ENCODE measurements at regions of chr20 and their contacts with region 1.

Region 1: DNA sequence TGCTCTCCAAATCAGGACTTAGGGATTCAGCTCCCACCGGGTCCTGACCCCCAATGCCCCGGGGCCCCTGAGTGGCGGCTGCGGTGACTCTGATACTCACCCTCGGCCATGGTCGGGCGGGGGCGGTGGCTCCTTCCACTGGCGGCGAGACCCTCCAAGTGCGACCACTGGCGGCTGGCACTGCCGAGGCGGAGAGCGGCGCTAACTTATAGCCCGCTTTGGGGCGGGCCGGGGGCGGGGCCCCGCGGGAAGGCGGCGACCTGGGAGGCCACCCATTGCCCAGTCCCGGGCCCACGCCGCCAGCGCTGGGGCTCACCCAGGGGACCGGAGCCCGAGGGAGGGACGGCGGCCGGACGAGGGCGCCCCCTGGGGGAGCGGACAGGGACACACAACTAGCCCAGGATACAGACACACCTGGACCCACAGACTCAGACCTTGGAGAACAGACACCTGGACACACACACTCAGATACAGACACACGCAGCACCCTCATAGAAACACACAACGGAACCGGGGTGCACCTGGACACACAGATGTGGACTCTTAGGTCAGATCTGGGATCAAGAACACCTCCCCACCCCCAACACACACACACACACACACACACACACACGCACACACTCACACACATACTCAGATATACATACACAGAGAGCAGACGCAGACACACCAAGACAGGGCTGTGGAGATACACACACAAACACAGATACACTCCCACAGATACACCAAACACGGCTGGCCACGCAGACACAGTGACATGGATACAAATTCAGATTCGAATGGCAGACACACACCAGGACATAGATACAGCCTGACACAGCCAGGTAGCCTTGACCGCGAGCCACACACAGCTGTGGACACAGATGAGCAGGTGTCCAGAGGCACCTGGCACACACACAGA is at the start of gene TGM2:
- DNase-seq: peak; percentile 71
- H3K4me3 ChIP-seq: peak within 1 kb of the TSS in 2 of 3 experiments; percentile 9 to 41
- H3K27ac ChIP-seq: peak within 1 kb of the TSS; percentile 4
- H3K4me1 ChIP-seq: peaks cover 56% of the 10 kb centered on the region
- H3K27me3 ChIP-seq: no peaks in the 10 kb centered on the region
- CTCF ChIP-seq: peak; percentile 47 to 76
- total RNA-seq, gene TGM2: 53.4 to 252 TPM

Region 2: DNA sequence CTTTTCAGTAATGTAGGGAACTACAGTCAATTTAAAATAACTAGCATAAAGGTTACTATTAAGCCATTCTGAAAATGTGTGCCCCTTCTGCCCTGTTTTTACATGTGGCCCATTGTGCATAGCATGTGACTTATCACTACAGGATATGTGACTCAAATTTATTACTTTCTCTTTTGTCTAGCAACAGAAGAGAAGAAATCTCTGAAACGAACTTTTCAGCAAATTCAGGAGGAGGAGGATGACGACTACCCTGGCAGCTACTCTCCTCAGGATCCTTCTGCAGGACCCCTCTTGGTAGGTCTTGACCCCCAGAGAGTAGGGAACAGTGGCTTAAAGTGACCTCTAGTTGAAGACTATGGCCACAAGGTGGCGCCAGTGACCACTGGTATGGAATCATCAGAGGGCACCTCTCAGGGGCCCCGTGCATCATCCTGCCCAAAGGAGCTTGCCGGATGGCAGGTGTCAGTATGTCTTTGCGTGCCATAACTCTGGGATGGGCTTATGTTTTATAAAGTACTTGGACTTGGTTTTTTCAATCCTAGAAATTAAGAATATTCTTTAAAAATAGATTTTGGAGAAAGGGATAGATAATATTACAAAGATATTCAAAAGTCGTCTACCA is 107.9 kb before region 1 on chr20:
- CTCF ChIA-PET with region 1: no interaction called
- dilution Hi-C with region 1: no loop called
- in situ Hi-C with region 1: no loop called
- intact Hi-C with region 1: loop called (anchors 1 kb)
- DNase-seq: peak; percentile 53
- H3K4me3 ChIP-seq: no peak overlapping the region
- H3K27ac ChIP-seq: no peak overlapping the region
- H3K4me1 ChIP-seq: no peaks in the 10 kb centered on the region
- H3K27me3 ChIP-seq: no peaks in the 10 kb centered on the region
- CTCF ChIP-seq: peak; percentile 75 to 82

Region 3: DNA sequence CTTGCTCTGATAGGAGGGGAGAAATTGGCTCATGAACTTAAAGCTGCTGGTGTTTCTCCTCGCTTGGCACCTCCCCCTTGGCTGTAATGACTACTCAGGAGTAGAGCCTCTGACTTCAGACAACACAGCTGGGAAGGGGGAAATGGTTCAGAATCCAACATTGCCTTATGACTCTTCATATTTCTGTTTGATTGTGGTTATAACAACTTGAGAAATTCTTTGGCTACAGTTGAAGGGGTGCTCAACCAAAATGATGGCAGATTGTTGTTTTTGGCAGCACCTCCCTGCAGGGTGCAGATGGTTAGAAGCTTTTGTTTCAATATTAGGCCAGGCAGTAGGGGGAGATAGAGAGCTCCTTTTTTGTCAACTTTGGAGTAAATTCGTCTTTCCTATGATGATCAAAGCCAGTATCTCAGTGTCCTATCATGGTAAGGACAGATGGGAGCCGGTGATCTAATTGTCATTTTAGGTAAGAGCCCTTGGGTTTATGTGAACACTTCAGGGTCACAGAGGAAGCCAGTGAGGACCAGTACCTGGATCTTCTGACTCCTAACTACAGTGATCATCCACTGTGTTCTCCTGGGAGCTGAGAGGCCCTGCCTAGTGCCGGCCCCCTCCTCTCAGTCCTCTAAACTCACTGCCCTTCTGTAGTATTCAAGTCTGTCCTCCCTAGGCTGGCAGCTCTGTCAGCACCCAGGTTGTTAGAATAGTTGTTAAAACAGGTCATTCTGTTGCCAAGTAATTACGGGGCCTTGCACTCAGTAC is 91.8 kb before region 1 on chr20:
- CTCF ChIA-PET with region 1: no interaction called
- dilution Hi-C with region 1: loop called (anchors 5 kb)
- in situ Hi-C with region 1: loop called in 1 of 2 experiments (anchors 10 kb)
- intact Hi-C with region 1: loop called (anchors 1 kb)
- DNase-seq: peak; percentile 78
- H3K4me3 ChIP-seq: no peak overlapping the region
- H3K27ac ChIP-seq: no peak overlapping the region
- H3K4me1 ChIP-seq: peaks cover 8% of the 10 kb centered on the region
- H3K27me3 ChIP-seq: no peaks in the 10 kb centered on the region
- CTCF ChIP-seq: peak; percentile 79 to 90

Region 4: GRCh38 chr20:38113401-38114325 is 51.7 kb before region 1 on chr20:
- CTCF ChIA-PET with region 1: no interaction called
- dilution Hi-C with region 1: no loop called
- in situ Hi-C with region 1: no loop called
- intact Hi-C with region 1: loop called (anchors 2 kb)
- DNase-seq: no peak
- H3K4me3 ChIP-seq: no peak overlapping the region
- H3K27ac ChIP-seq: no peak overlapping the region
- H3K4me1 ChIP-seq: peaks cover 40% of the 10 kb centered on the region
- H3K27me3 ChIP-seq: no peaks in the 10 kb centered on the region
- CTCF ChIP-seq: peak in 1 of 2 donors; percentile 27

Region 5: GRCh38 chr20:38201356-38201755 is 36.0 kb after region 1 on chr20:
- CTCF ChIA-PET with region 1: no interaction called
- dilution Hi-C with region 1: no loop called
- in situ Hi-C with region 1: no loop called
- intact Hi-C with region 1: loop called (anchors 5 kb)
- DNase-seq: peak; percentile 94
- H3K4me3 ChIP-seq: no peak overlapping the region
- H3K27ac ChIP-seq: peak overlapping the region; percentile 26
- H3K4me1 ChIP-seq: peaks cover 43% of the 10 kb centered on the region
- H3K27me3 ChIP-seq: no peaks in the 10 kb centered on the region
- CTCF ChIP-seq: no peak

Region 6: DNA sequence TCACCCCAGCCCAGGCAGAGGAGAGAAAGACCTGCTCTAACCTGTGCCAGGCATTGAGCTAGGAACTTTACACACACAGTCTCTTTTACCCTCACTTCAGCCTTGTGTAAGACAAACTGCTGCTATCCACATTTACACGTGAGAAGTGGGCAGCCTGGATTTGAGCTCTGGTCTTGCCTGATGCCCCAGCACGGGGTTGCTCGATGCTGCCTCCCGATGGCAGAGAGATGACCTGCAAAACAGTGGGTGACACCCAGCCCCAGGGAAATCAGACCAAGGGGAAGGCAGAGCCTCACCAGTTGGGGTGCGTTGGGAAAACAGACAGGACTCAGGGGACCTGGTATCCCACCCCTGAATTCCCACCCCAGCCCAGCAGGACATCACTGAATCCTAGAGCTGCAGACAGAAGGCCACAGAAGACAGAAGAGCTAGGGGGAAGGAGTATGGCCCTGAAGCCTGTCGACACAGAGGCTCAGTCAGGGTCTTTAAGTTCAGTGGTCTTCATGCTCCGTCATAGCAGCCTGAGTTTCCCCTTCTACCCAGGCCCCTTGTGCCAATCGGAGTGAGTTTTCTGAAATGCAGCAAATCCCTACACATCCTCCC is 139.6 kb after region 1 on chr20:
- CTCF ChIA-PET with region 1: no interaction called
- dilution Hi-C with region 1: no loop called
- in situ Hi-C with region 1: no loop called
- intact Hi-C with region 1: loop called (anchors 10 kb)
- DNase-seq: peak; percentile 30
- H3K4me3 ChIP-seq: no peak overlapping the region
- H3K27ac ChIP-seq: no peak overlapping the region
- H3K4me1 ChIP-seq: peaks cover 12% of the 10 kb centered on the region
- H3K27me3 ChIP-seq: no peaks in the 10 kb centered on the region
- CTCF ChIP-seq: peak; percentile 61 to 85

Measured in mammary epithelial cell (primary cell).